ENCODE measurements at regions of chr1 and their contacts with region 1.

Region 1: DNA sequence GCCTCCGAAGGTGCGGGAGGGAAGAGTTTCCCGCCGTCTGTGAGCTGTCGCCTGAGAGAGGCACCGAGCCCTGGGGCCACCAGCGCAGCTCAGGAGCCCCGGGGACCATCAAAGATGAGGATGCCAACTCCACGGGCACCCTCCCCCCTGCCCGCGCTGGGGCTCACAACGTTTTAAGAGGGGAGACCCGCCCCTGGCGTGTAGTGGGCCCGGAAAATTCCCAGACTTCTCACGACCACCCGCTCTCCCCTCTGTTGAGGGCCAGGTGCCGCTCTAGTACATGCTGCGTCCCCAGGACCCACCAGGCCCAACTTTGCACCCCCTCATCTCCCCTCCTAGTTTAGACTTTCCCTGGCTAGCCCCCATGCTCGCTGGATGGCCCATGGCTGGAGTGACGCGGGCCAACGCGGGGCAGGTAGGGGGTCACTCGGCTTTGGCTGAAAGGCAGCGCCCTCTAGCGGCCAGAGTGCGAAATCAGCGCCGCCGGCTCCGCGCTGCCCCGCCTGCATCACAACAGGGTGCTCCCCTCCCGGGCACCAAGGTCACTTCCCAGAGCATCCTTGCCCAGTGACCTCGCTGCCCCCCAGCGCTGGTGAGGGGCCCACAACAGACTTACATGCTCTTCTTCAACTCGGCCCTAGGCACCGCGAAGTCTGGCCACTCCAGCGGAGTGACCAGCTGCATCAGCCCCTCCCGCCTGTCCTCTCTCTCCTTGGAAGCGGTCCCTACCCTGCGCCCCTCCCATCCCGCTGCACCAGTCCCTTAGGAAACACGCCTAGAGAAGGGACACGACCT is 1.8 kb downstream of the CD160 start:
- DNase-seq: peak; percentile 41
- H3K4me3 ChIP-seq: peak overlapping the region in 2 of 3 experiments; percentile 29 to 30
- H3K27ac ChIP-seq: no peak overlapping the region
- H3K4me1 ChIP-seq: peaks cover 9% of the 10 kb centered on the region
- H3K27me3 ChIP-seq: peaks cover 0 to 4% of the 10 kb centered on the region in 2 experiments
- CTCF ChIP-seq: peak; percentile 91 to 94
- POLR2A ChIP-seq: no peak

Region 2: GRCh38 chr1:145708063-145708699 is 12.9 kb before region 1 on chr1:
- CTCF ChIA-PET with region 1: interaction called, 15 read pairs
- POLR2A ChIA-PET with region 1: no interaction called
- dilution Hi-C with region 1: no loop called
- intact Hi-C with region 1: no loop called
- DNase-seq: no peak
- H3K4me3 ChIP-seq: no peak overlapping the region
- H3K27ac ChIP-seq: no peak overlapping the region
- H3K4me1 ChIP-seq: no peaks in the 10 kb centered on the region
- H3K27me3 ChIP-seq: peaks cover 6 to 7% of the 10 kb centered on the region in 2 experiments
- CTCF ChIP-seq: no peak
- POLR2A ChIP-seq: no peak

Region 3: DNA sequence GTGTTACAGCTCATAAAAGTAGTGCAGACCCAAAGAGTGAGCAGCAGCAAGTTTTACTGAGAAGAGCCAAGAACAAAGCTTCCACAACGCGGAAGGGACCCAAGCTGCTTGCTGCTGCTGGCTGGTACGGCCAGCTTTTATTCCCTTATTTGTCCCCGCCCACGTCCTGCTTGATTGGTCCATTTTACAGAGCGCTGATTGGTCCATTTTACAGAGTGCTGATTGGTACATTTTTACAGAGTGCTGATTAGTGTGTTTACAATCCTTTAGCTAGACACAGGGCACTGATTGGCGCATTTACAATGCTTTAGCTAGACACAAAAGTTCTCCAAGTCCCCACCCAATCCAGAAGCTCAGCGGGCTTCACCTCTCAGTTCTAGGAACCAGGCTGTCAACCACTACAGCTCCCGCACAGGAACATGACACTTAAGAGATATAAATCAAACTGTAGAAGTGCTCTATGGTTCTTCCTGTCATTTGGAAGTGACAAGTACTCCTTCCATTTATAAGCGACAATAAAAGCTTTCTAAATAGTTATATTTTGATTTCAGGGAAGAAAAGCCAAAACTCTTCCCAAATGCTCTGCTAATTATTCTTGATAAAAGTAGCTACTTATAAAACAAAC is 74.3 kb after region 1 on chr1:
- CTCF ChIA-PET with region 1: no interaction called
- POLR2A ChIA-PET with region 1: no interaction called
- dilution Hi-C with region 1: no loop called
- intact Hi-C with region 1: no loop called
- DNase-seq: no peak
- H3K4me3 ChIP-seq: no peak overlapping the region
- H3K27ac ChIP-seq: no peak overlapping the region
- H3K4me1 ChIP-seq: no peaks in the 10 kb centered on the region
- H3K27me3 ChIP-seq: no peaks in the 10 kb centered on the region
- CTCF ChIP-seq: no peak
- POLR2A ChIP-seq: no peak

Region 4: DNA sequence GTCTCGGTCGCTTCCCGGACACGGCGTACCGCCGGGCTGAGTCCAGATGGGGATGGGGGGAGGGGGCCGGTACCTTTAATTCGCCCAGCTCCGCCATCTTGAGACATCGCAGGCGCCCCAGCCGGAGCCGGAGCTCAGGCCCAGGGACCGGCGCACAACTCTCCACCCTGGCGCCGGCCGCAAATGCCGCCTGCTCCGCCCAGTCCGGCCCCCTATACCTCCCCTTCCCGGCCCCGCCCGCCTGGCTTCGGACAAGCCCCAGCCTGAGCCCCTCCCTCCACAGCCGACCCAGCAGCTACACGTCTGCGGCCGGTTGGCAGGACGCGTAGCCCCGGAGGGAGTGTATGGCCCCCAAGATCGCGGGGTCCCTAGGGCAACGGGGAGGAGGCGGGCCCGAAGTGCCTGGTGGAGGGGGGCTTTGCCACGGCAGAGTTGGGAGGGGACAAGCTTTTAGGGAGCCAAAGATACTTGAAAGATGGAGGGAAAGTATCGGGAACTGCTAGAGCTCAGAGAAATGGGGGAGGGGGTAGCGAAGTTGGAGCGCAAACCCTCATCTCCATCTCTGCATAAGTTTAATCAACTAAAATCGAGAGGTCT is 137.9 kb after region 1 on chr1 and contains the start of gene PIAS3:
- CTCF ChIA-PET with region 1: no interaction called
- POLR2A ChIA-PET with region 1: no interaction called
- dilution Hi-C with region 1: no loop called
- intact Hi-C with region 1: no loop called
- DNase-seq: peak; percentile 97
- H3K4me3 ChIP-seq: peak within 1 kb of the TSS; percentile 64 to 78 (median 71)
- H3K27ac ChIP-seq: peak within 1 kb of the TSS; percentile 43
- H3K4me1 ChIP-seq: peaks cover 7% of the 10 kb centered on the region
- H3K27me3 ChIP-seq: peaks cover 2 to 4% of the 10 kb centered on the region in 2 experiments
- CTCF ChIP-seq: no peak
- POLR2A ChIP-seq: no peak
- total RNA-seq, gene PIAS3: 50.1 and 53.3 TPM in 2 replicates

Region 5: GRCh38 chr1:146012737-146013403 is 291.8 kb after region 1 on chr1:
- CTCF ChIA-PET with region 1: interaction called, 4 read pairs
- POLR2A ChIA-PET with region 1: no interaction called
- dilution Hi-C with region 1: no loop called
- intact Hi-C with region 1: loop called (anchors 2 kb)
- DNase-seq: peak; percentile 84
- H3K4me3 ChIP-seq: no peak overlapping the region
- H3K27ac ChIP-seq: no peak overlapping the region
- H3K4me1 ChIP-seq: peaks cover 4% of the 10 kb centered on the region
- H3K27me3 ChIP-seq: peaks cover 6 to 9% of the 10 kb centered on the region in 2 experiments
- CTCF ChIP-seq: peak; percentile 52 to 60
- POLR2A ChIP-seq: no peak